Calu3 (cell line): ENCODE measurements at regions of chr13 and their contacts with region 1.

Region 1: GRCh38 chr13:103282571-103283450 is 216.6 kb upstream of the SLC10A2 start:
- DNase-seq: no peak
- H3K4me3 Mint-ChIP-seq: no peak overlapping the region
- H3K27ac Mint-ChIP-seq: no peak overlapping the region
- H3K4me1 Mint-ChIP-seq: peaks cover 2% of the 10 kb centered on the region
- H3K27me3 Mint-ChIP-seq: no peaks in the 10 kb centered on the region
- CTCF ChIP-seq: no peak

Region 2: GRCh38 chr13:103315711-103316110 is 32.9 kb after region 1 on chr13:
- CTCF ChIA-PET with region 1: no interaction called
- intact Hi-C with region 1: no loop called
- DNase-seq: no peak
- H3K4me3 Mint-ChIP-seq: no peak overlapping the region
- H3K27ac Mint-ChIP-seq: no peak overlapping the region
- H3K4me1 Mint-ChIP-seq: no peaks in the 10 kb centered on the region
- H3K27me3 Mint-ChIP-seq: no peaks in the 10 kb centered on the region
- CTCF ChIP-seq: no peak

Region 3: DNA sequence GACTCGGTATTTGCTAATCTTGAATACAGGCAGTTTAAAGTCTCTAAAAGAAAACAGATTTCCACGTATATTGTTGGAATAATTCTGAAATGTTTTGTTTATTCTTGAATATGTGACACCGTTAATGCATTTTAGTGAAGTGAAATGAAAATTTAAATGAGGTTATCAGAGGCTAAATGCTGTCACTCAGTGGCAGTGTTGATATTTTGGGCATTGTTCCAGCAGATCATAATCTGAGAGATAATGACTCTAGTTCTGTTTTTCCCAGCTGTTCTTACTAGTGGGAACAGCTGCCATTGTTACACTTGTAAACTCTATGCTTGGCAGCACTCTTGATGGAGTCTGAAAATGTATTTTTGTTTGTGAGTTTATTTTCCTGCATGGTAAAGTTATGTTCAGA is 149.0 kb after region 1 on chr13:
- CTCF ChIA-PET with region 1: no interaction called
- intact Hi-C with region 1: loop called (anchors 10 kb)
- DNase-seq: no peak
- H3K4me3 Mint-ChIP-seq: no peak overlapping the region
- H3K27ac Mint-ChIP-seq: no peak overlapping the region
- H3K4me1 Mint-ChIP-seq: no peaks in the 10 kb centered on the region
- H3K27me3 Mint-ChIP-seq: no peaks in the 10 kb centered on the region
- CTCF ChIP-seq: no peak

Region 4: GRCh38 chr13:103487841-103488240 is 205.0 kb after region 1 on chr13:
- CTCF ChIA-PET with region 1: no interaction called
- intact Hi-C with region 1: no loop called
- DNase-seq: no peak
- H3K4me3 Mint-ChIP-seq: no peak overlapping the region
- H3K27ac Mint-ChIP-seq: no peak overlapping the region
- H3K4me1 Mint-ChIP-seq: no peaks in the 10 kb centered on the region
- H3K27me3 Mint-ChIP-seq: no peaks in the 10 kb centered on the region
- CTCF ChIP-seq: no peak